Dendritic cell treated with granulocyte-macrophage colony-stimulating factor and Interleukin-4, amounts not matched to agents 40 ng/mL and 50 ng/mL, for 4 days (primary cell): ENCODE measurements at regions of chrX and their contacts with region 1.

Region 1: GRCh38 chrX:152830312-152831305 is at the starts of genes CETN2 and NSDHL:
- H3K4me3 Mint-ChIP-seq: peak within 1 kb of the TSS; percentile 89
- H3K27ac Mint-ChIP-seq: peak within 1 kb of the TSS; percentile 92
- H3K4me1 Mint-ChIP-seq: peaks cover 33% of the 10 kb centered on the region
- H3K27me3 Mint-ChIP-seq: no peaks in the 10 kb centered on the region

Region 2: GRCh38 chrX:152445926-152446325 is 384.7 kb before region 1 on chrX:
- intact Hi-C with region 1: no loop called
- H3K4me3 Mint-ChIP-seq: no peak overlapping the region
- H3K27ac Mint-ChIP-seq: no peak overlapping the region
- H3K4me1 Mint-ChIP-seq: no peaks in the 10 kb centered on the region
- H3K27me3 Mint-ChIP-seq: no peaks in the 10 kb centered on the region

Region 3: GRCh38 chrX:152915527-152916241 is 85.1 kb after region 1 on chrX:
- intact Hi-C with region 1: loop called (anchors 10 kb)
- H3K4me3 Mint-ChIP-seq: no peak overlapping the region
- H3K27ac Mint-ChIP-seq: peak overlapping the region; percentile 45
- H3K4me1 Mint-ChIP-seq: peaks cover 60% of the 10 kb centered on the region
- H3K27me3 Mint-ChIP-seq: no peaks in the 10 kb centered on the region

Region 4: GRCh38 chrX:153580700-153581386 is 750.2 kb after region 1 on chrX:
- intact Hi-C with region 1: no loop called
- H3K4me3 Mint-ChIP-seq: no peak overlapping the region
- H3K27ac Mint-ChIP-seq: no peak overlapping the region
- H3K4me1 Mint-ChIP-seq: peaks cover 27% of the 10 kb centered on the region
- H3K27me3 Mint-ChIP-seq: peaks cover 6% of the 10 kb centered on the region